Cardiac septum (tissue), 1 donor: ENCODE measurements at regions of chr4 and their contacts with region 1.

Region 1: DNA sequence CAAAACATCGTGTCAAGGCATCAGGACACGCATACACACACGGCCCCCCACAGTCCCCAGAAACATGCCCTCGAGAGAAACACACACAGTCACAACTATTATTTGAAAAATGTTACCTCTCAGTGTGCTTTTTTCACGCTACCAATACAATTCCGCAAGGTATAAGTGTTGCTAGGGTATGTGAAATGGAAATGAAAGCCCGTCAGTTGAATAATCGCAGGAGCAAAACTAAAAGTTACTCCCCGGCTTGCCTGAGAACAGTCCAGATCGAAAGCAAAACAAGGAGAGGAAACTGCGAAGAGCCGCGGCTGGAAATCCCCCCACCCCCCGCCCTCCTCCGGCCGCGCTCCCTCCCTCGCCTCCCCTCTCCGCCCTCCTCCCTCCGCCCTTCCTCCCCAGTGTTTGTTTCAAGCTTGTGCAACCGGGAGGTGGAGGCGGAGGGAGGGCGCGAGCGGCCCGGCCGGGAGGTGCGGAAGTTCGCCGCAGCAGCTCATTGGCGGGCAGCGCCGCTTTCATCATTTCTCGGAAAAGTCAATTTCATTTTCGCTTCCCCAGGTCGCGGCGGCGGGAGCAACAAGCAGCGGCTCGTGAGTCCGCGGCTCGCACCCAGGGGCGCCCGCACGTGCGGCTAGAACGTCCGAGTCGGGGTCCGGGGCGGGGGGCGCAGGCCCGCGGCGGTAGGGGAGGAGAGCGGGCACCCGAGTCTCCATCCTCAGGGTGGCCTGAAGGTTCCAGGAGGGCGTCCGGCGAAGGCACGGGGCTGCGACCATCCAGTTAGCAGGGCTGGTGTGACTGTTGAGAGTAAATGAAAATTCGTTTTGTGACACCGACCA is at the start of gene IRF2:
- DNase-seq: peak; percentile 98
- total RNA-seq, gene IRF2: 22.4 TPM

Region 2: GRCh38 chr4:184053434-184053833 is 421.0 kb before region 1 on chr4:
- intact Hi-C with region 1: no loop called
- DNase-seq: no peak

Region 3: GRCh38 chr4:184263910-184264732 is 210.4 kb before region 1 on chr4:
- intact Hi-C with region 1: loop called (anchors 5 kb)
- DNase-seq: peak; percentile 94

Region 4: DNA sequence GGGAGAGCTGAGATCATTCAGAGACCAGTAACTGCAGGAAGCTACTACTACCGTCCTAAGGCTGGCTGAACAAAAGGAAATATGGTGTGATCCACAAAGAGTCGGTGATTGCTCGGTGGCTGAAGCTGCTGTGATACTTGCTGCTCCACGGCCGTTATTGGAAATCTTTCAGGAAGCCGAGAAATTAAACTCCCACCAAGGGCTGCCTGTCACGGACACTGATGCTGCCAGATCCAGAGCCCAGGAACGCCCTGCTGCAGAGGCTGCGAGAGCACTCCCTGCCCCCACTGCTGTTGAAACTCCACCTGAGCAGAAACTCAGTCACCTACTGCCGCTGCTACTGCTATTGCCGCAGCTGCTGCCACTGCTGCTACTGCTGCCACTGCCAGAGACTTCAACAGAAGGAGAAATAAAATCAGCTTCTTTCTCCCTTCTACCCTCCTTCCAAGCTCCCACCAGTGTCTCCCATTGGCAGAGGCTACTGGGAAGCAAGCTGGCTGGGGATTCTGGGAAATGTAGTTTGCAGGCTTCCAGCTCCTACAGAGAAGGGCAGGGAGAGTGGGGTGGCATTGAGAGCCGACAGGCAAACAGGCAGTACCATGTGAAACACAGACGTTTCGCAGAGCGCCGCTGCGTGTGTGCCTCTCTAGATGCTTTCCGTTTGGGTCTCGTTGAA is 130.8 kb before region 1 on chr4:
- intact Hi-C with region 1: loop called (anchors 5 kb)
- DNase-seq: peak; percentile 90

Region 5: GRCh38 chr4:184401397-184402171 is 72.9 kb before region 1 on chr4:
- intact Hi-C with region 1: loop called (anchors 1 kb)
- DNase-seq: no peak

Region 6: GRCh38 chr4:184538023-184538599 is 63.6 kb after region 1 on chr4:
- intact Hi-C with region 1: loop called (anchors 1 kb)
- DNase-seq: peak; percentile 91

Region 7: GRCh38 chr4:184825896-184826690 is 351.6 kb after region 1 on chr4 and contains the start of gene ACSL1:
- intact Hi-C with region 1: loop called (anchors 10 kb)
- DNase-seq: peak; percentile 96
- total RNA-seq, gene ACSL1: 98.6 TPM